ENCODE measurements at regions of chr1 and their contacts with region 1.

Region 1: DNA sequence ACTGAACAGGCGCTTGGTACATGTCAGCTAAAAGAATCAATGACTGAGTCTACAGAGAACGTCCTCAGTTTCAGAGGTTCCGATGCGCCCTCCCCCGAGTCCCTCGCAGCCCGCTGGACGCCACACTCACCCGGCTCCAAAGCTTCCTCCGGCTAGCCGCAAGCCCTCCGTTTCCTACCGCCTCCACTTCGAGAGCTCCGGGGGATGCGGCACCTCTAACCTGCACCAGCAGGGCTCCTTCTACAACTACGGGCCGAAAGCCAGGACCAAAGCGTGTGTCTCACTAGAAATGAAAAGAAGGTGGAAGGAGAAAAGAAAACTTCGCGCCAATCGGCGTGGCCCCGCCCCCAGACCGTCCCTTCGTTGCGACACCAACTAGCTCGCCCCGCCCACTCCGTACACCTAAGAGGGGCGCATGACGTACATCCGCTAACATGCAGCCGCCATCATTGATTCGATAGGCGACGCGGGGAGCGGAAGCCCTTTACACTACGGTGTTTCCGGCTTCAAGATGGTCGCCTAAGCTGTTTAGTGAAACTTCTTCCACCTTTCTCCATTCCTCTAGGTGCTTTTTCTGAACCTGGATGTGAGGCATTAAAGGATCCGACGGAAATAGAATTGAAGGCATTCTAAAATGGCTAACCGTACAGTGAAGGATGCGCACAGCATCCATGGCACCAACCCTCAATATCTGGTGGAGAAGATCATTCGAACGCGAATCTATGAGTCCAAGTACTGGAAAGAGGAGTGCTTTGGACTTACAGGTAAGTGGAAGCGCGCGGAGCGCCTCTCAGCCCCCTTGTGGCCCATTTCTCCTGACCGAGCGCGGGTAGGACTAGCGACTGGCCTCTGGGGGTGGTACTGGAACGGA is at the starts of genes ORC1 and PRPF38A:
- DNase-seq: peak; percentile 94 to 100 (median 97)
- ATAC-seq: peak; percentile 89
- H3K4me3 ChIP-seq: peak within 1 kb of the TSS; percentile 62
- H3K4me3 Mint-ChIP-seq: peak within 1 kb of the TSS; percentile 98
- H3K27ac ChIP-seq: peak within 1 kb of the TSS; percentile 88 to 89
- H3K27ac Mint-ChIP-seq: peak within 1 kb of the TSS; percentile 99
- H3K4me1 ChIP-seq: peaks cover 13% of the 10 kb centered on the region
- H3K4me1 Mint-ChIP-seq: peaks cover 48% of the 10 kb centered on the region
- H3K27me3 ChIP-seq: no peaks in the 10 kb centered on the region
- H3K27me3 Mint-ChIP-seq: no peaks in the 10 kb centered on the region
- CTCF ChIP-seq: peak; percentile 34
- total RNA-seq, gene ORC1: 1.1 to 1.3 TPM
- total RNA-seq, gene PRPF38A: 56.2 to 63.6 TPM

Region 2: GRCh38 chr1:52141513-52142219 is 262.7 kb before region 1 on chr1 and contains the start of gene ZFYVE9:
- CTCF ChIA-PET with region 1: no interaction called
- POLR2A ChIA-PET with region 1: interaction called, 3 read pairs
- intact Hi-C with region 1: loop called in 1 of 2 experiments (anchors 10 kb)
- DNase-seq: peak; percentile 43 to 91 (median 68)
- ATAC-seq: peak; percentile 82
- H3K4me3 ChIP-seq: peak within 1 kb of the TSS; percentile 63
- H3K4me3 Mint-ChIP-seq: peak within 1 kb of the TSS; percentile 97
- H3K27ac ChIP-seq: no peak within 1 kb of the TSS
- H3K27ac Mint-ChIP-seq: peak within 1 kb of the TSS; percentile 85
- H3K4me1 ChIP-seq: peaks cover 23% of the 10 kb centered on the region
- H3K4me1 Mint-ChIP-seq: peaks cover 36% of the 10 kb centered on the region
- H3K27me3 ChIP-seq: no peaks in the 10 kb centered on the region
- H3K27me3 Mint-ChIP-seq: no peaks in the 10 kb centered on the region
- CTCF ChIP-seq: peak; percentile 33
- total RNA-seq, gene ZFYVE9: 5.4 to 6.1 TPM

Region 3: DNA sequence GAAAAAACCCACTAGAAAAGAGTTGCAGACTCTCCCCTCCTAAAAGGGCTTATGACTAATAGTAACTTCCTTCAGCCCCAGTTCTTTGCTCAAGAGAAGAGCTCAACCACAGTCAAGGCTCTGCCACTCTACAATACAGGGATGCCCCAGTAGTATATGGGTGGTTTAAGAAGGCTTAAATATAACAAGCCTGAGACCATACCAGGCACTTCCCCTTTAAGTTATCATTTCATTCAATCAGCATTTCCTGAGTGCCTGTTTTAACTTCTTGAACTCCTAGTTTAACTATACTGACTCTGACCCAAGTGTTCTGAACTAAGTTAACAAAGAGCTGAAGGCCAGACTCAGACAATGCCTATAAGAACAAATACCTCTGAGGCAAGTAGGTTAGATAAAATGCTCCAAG is 19.9 kb after region 1 on chr1:
- CTCF ChIA-PET with region 1: interaction called, 35 read pairs
- POLR2A ChIA-PET with region 1: interaction called, 72 read pairs
- intact Hi-C with region 1: loop called (anchors 1 to 2 kb)
- DNase-seq: peak in 12 of 14 experiments; percentile 11 to 82 (median 26)
- ATAC-seq: peak; percentile 88
- H3K4me3 ChIP-seq: peak overlapping the region; percentile 28
- H3K4me3 Mint-ChIP-seq: peak overlapping the region; percentile 53
- H3K27ac ChIP-seq: peak overlapping the region; percentile 78 to 81
- H3K27ac Mint-ChIP-seq: peak overlapping the region; percentile 100
- H3K4me1 ChIP-seq: peaks cover 21% of the 10 kb centered on the region
- H3K4me1 Mint-ChIP-seq: peaks cover 58% of the 10 kb centered on the region
- H3K27me3 ChIP-seq: no peaks in the 10 kb centered on the region
- H3K27me3 Mint-ChIP-seq: no peaks in the 10 kb centered on the region
- CTCF ChIP-seq: no peak

Region 4: GRCh38 chr1:52702886-52703787 is 298.8 kb after region 1 on chr1:
- CTCF ChIA-PET with region 1: no interaction called
- POLR2A ChIA-PET with region 1: interaction called, 14 read pairs
- intact Hi-C with region 1: no loop called
- DNase-seq: peak; percentile 63 to 92 (median 72)
- ATAC-seq: peak; percentile 91
- H3K4me3 ChIP-seq: peak overlapping the region; percentile 62
- H3K4me3 Mint-ChIP-seq: peak overlapping the region; percentile 84
- H3K27ac ChIP-seq: peak overlapping the region; percentile 56 to 96
- H3K27ac Mint-ChIP-seq: peak overlapping the region; percentile 95
- H3K4me1 ChIP-seq: peaks cover 22% of the 10 kb centered on the region
- H3K4me1 Mint-ChIP-seq: peaks cover 20% of the 10 kb centered on the region
- H3K27me3 ChIP-seq: no peaks in the 10 kb centered on the region
- H3K27me3 Mint-ChIP-seq: no peaks in the 10 kb centered on the region
- CTCF ChIP-seq: no peak

Region 5: GRCh38 chr1:52927212-52928014 is 523.1 kb after region 1 on chr1 and contains the start of gene SCP2:
- CTCF ChIA-PET with region 1: no interaction called
- POLR2A ChIA-PET with region 1: interaction called, 4 read pairs
- intact Hi-C with region 1: loop called in 1 of 2 experiments (anchors 10 kb)
- DNase-seq: peak; percentile 64 to 90 (median 79)
- ATAC-seq: peak; percentile 96
- H3K4me3 ChIP-seq: peak within 1 kb of the TSS; percentile 85
- H3K4me3 Mint-ChIP-seq: peak within 1 kb of the TSS; percentile 81
- H3K27ac ChIP-seq: no peak within 1 kb of the TSS
- H3K27ac Mint-ChIP-seq: peak within 1 kb of the TSS; percentile 38
- H3K4me1 ChIP-seq: peaks cover 23% of the 10 kb centered on the region
- H3K4me1 Mint-ChIP-seq: peaks cover 38% of the 10 kb centered on the region
- H3K27me3 ChIP-seq: no peaks in the 10 kb centered on the region
- H3K27me3 Mint-ChIP-seq: no peaks in the 10 kb centered on the region
- CTCF ChIP-seq: no peak
- total RNA-seq, gene SCP2: 22.7 to 27.0 TPM

Measured in CD4-positive, alpha-beta T cell (primary cell).